Posterior vena cava (tissue), 2 donors: ENCODE measurements at regions of chr13 and their contacts with region 1.

Region 1: GRCh38 chr13:52128714-52129700 is at the start of gene NEK5:
- DNase-seq: peak; percentile 88
- total RNA-seq, gene NEK5: 0.29 to 0.42 TPM

Region 2: GRCh38 chr13:51714663-51715168 is 414.3 kb before region 1 on chr13:
- intact Hi-C with region 1: no loop called
- DNase-seq: no peak

Region 3: GRCh38 chr13:51814825-51815650 is 314.0 kb before region 1 on chr13:
- intact Hi-C with region 1: loop called (anchors 5 kb)
- DNase-seq: no peak

Region 4: GRCh38 chr13:51895906-51896888 is 232.8 kb before region 1 on chr13:
- intact Hi-C with region 1: loop called in 1 of 2 experiments (anchors 10 kb)
- DNase-seq: no peak

Region 5: GRCh38 chr13:52011632-52012511 is 117.1 kb before region 1 on chr13 and contains the start of gene ALG11:
- intact Hi-C with region 1: loop called (anchors 5 to 10 kb)
- DNase-seq: peak; percentile 100
- total RNA-seq, gene ALG11: 27.1 to 34.9 TPM

Region 6: DNA sequence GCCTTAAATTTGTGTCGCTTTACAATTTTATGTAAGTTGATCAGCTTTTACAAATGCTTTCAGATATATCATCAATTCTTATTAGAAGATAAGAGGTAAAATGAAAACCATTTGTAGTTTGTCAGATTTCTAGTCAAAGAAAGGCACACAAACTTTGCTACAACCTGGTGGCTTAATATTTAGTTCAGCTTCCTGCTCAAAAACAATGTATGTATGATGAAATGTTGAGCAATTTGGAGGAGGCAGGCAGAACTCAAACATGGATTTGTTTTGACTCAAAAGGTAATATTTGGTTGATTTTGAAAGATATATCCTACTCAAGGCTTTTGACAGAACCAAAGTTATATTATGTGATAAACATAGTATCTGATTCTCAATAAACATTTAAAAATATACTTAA is 24.4 kb before region 1 on chr13:
- intact Hi-C with region 1: no loop called
- DNase-seq: no peak